Activated CD4-positive, alpha-beta memory T cell treated with anti-CD3 and anti-CD28 coated beads for 36 hours (primary cell): ENCODE measurements at regions of chr12 and their contacts with region 1.

Region 1: DNA sequence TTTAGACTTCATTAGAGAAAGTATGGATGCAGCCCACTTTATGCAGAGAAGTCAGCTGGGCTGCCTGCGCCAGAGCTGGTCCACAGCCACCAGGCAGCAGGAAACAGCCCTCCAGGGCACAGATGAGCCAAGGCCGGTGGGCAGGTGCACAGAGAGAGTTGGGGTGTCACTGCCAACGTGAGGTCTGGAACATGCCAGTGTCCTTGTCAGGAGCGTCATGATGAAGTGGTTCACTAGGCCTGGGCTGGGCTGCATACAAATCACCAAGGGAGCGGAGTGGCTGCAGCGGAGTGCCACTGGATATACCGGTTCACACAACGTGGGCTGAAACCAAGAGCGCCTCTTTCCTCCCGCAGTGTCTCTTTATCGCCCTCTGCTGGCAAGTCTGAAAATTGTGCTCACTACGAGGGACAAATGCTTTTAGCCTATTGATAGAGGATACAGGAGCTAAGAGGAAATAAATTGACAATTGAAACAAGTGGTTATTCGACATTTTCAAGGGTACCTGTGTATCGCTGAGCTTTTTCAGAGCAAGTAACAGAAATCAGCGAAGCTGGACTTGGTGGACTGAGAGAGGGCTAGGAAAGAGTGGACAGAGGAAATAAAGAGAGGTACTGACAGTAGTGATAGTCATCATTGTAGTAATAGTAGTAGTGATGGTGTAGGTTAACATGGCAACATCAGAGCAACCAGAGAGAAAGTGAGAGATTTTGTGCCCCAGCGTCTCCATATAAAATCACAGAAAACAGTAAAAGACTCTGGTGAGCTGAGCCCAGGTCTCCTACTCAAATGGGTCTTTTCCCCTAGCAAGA is 52.0 kb upstream of the ITPR2 start:
- DNase-seq: peak; percentile 87
- H3K4me3 Mint-ChIP-seq: peak overlapping the region; percentile 57
- H3K27ac Mint-ChIP-seq: no peak overlapping the region
- H3K4me1 Mint-ChIP-seq: peaks cover 7% of the 10 kb centered on the region
- H3K27me3 Mint-ChIP-seq: peaks cover 4% of the 10 kb centered on the region

Region 2: GRCh38 chr12:26832822-26833742 is 51.9 kb before region 1 on chr12 and contains the start of gene ITPR2:
- CTCF ChIA-PET with region 1: interaction called, 33 read pairs
- POLR2A ChIA-PET with region 1: no interaction called
- intact Hi-C with region 1: loop called (anchors 1 kb)
- DNase-seq: peak; percentile 96
- H3K4me3 Mint-ChIP-seq: peak within 1 kb of the TSS; percentile 99
- H3K27ac Mint-ChIP-seq: peak within 1 kb of the TSS; percentile 98
- H3K4me1 Mint-ChIP-seq: peaks cover 34% of the 10 kb centered on the region
- H3K27me3 Mint-ChIP-seq: no peaks in the 10 kb centered on the region
- total RNA-seq, gene ITPR2: 23.7 to 25.0 TPM

Region 3: GRCh38 chr12:26848156-26848825 is 36.7 kb before region 1 on chr12:
- CTCF ChIA-PET with region 1: interaction called, 22 read pairs
- POLR2A ChIA-PET with region 1: no interaction called
- intact Hi-C with region 1: loop called (anchors 1 kb)
- DNase-seq: no peak
- H3K4me3 Mint-ChIP-seq: no peak overlapping the region
- H3K27ac Mint-ChIP-seq: no peak overlapping the region
- H3K4me1 Mint-ChIP-seq: no peaks in the 10 kb centered on the region
- H3K27me3 Mint-ChIP-seq: peaks cover 6% of the 10 kb centered on the region

Region 4: GRCh38 chr12:26853303-26854030 is 31.5 kb before region 1 on chr12:
- CTCF ChIA-PET with region 1: interaction called, 48 read pairs
- POLR2A ChIA-PET with region 1: no interaction called
- intact Hi-C with region 1: loop called (anchors 1 kb)
- DNase-seq: peak; percentile 82
- H3K4me3 Mint-ChIP-seq: no peak overlapping the region
- H3K27ac Mint-ChIP-seq: no peak overlapping the region
- H3K4me1 Mint-ChIP-seq: no peaks in the 10 kb centered on the region
- H3K27me3 Mint-ChIP-seq: peaks cover 4% of the 10 kb centered on the region

Region 5: GRCh38 chr12:26870491-26871419 is 14.2 kb before region 1 on chr12:
- CTCF ChIA-PET with region 1: interaction called, 27 read pairs
- POLR2A ChIA-PET with region 1: no interaction called
- intact Hi-C with region 1: no loop called
- DNase-seq: no peak
- H3K4me3 Mint-ChIP-seq: no peak overlapping the region
- H3K27ac Mint-ChIP-seq: no peak overlapping the region
- H3K4me1 Mint-ChIP-seq: peaks cover 10% of the 10 kb centered on the region
- H3K27me3 Mint-ChIP-seq: no peaks in the 10 kb centered on the region

Region 6: DNA sequence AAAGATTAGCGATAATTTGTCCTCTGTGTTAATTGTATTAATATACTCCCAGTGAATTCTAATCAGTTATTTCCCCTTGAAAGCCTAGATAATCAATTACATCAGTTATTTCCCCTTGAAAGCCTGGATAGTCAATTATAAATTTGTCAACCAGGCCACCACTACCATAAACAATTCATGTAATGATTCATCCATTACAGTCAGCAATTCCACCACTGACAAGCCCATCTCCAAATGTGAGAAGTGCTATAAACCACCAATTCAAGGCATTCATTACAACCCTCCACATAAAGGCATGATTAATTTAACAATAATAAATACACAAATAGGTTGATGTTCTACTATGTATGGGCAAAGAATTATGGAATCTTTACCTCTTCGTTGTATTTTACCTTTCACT is 11.9 kb after region 1 on chr12:
- CTCF ChIA-PET with region 1: interaction called, 14 read pairs
- POLR2A ChIA-PET with region 1: no interaction called
- intact Hi-C with region 1: no loop called
- DNase-seq: no peak
- H3K4me3 Mint-ChIP-seq: no peak overlapping the region
- H3K27ac Mint-ChIP-seq: no peak overlapping the region
- H3K4me1 Mint-ChIP-seq: no peaks in the 10 kb centered on the region
- H3K27me3 Mint-ChIP-seq: no peaks in the 10 kb centered on the region